PC-9 (cell line): ENCODE measurements at regions of chr6 and their contacts with region 1.

Region 1: DNA sequence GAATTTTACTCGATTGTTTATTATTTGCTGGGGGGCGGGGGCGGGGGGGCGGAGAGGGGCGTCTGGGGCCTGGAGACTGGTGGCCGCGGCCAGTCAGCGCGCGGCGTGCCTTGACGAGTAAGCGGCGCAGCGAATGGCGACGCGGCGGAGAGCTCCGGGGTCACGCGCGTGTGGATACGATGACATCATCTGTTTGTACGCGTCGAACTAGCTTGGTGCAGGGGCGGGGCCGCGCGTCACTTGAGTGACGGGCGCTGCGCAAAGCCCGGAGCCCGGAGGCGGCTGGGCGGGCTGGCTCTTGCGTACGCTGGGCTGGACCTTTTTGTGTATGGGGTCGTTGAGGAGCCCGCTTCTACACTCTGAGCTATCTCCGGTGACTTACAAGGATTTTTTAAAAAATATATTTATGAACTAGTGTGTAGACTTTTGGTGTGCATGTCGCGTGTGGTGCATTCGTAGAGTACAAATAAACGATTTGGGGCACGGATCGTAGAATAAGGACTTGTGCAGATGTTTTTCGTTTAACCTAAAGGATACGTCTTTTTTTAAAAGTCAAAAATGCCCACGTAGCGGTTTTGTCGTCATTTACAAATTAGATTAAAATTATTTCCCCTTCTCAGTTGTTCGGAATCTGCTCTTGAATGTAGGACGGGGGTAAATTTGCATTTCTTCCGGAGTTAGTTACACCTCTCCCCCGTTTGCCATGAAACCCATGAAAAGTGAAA is 2.2 kb upstream of the FOXO3 start:
- DNase-seq: peak; percentile 95 to 96
- H3K4me3 ChIP-seq: peak overlapping the region; percentile 99
- H3K27ac ChIP-seq: peak overlapping the region; percentile 83
- H3K4me1 ChIP-seq: peaks cover 12% of the 10 kb centered on the region
- H3K27me3 ChIP-seq: no peaks in the 10 kb centered on the region
- CTCF ChIP-seq: no peak

Region 2: DNA sequence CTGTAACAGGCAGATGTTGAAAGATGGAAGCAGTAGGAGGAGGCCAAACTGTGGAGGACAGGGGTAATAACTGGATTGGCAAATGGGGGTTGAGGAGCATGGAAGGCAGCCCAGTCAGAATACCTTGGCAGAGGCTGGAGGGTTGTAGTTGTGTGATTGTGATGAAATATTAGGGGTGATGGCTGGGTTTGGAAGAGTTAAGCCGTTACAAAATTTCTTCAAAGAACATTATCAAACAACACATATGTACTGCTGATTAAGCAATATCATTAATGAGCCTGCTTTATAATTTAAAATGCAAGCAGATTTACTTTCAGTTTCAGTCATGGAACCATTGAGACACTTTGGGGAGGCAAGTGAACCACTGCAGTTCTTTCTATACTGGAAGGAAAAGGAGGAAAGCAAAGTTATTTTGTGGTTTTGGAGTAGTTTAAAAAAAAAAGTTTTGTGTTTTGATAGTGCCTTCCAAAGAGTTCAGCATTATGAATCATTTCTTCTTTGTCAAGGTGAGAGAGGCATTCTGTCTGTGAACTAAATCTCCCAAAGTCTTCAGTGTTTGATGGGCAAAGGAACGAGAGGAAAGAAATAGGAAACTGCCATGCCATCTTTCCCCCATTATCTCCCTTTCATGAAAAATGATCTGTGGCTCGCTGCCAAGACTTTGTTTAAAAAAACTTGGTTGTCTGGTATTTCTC is 22.9 kb after region 1 on chr6:
- CTCF ChIA-PET with region 1: no interaction called
- POLR2A ChIA-PET with region 1: no interaction called
- intact Hi-C with region 1: loop called (anchors 1 kb)
- DNase-seq: peak; percentile 51 to 86
- H3K4me3 ChIP-seq: peak overlapping the region; percentile 32; the same call in 1 of the 2 replicates
- H3K27ac ChIP-seq: peak overlapping the region; percentile 70
- H3K4me1 ChIP-seq: peaks cover 66% of the 10 kb centered on the region
- H3K27me3 ChIP-seq: no peaks in the 10 kb centered on the region
- CTCF ChIP-seq: no peak

Region 3: GRCh38 chr6:108689247-108690161 is 131.0 kb after region 1 on chr6:
- CTCF ChIA-PET with region 1: no interaction called
- POLR2A ChIA-PET with region 1: interaction called, 9 read pairs
- intact Hi-C with region 1: loop called (anchors 1 kb)
- DNase-seq: peak; percentile 96 to 99
- H3K4me3 ChIP-seq: peak overlapping the region; percentile 7; the same call in 1 of the 2 replicates
- H3K27ac ChIP-seq: peak overlapping the region; percentile 83
- H3K4me1 ChIP-seq: peaks cover 66% of the 10 kb centered on the region
- H3K27me3 ChIP-seq: no peaks in the 10 kb centered on the region
- CTCF ChIP-seq: no peak

Region 4: GRCh38 chr6:108732136-108732885 is 173.8 kb after region 1 on chr6:
- CTCF ChIA-PET with region 1: no interaction called
- POLR2A ChIA-PET with region 1: interaction called, 9 read pairs
- intact Hi-C with region 1: loop called (anchors 1 kb)
- DNase-seq: peak; percentile 96 to 100
- H3K4me3 ChIP-seq: peak overlapping the region; percentile 46; the same call in 1 of the 2 replicates
- H3K27ac ChIP-seq: peak overlapping the region; percentile 99
- H3K4me1 ChIP-seq: peaks cover 71% of the 10 kb centered on the region
- H3K27me3 ChIP-seq: no peaks in the 10 kb centered on the region
- CTCF ChIP-seq: no peak

Region 5: DNA sequence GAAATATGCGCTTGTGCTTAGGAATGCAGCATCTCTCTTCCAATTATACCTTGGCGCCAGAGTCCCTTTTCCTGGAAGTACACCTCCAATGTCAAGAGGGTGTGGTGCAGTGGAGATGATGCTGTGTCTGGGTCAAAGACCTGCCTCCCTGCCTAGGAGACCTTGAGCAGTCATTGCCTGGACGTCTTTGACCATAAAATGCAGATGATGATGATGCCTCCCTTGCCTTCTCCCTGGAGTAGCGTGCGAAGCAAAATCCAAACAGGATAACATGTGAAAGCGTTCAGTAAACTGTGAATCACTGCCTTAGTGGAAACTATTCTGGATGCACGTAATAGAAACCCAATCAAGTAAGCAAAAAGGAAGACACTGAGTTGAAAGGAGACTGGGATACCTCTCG is 192.3 kb after region 1 on chr6:
- CTCF ChIA-PET with region 1: no interaction called
- POLR2A ChIA-PET with region 1: interaction called, 13 read pairs
- intact Hi-C with region 1: no loop called
- DNase-seq: no peak
- H3K4me3 ChIP-seq: no peak overlapping the region
- H3K27ac ChIP-seq: no peak overlapping the region
- H3K4me1 ChIP-seq: peaks cover 61% of the 10 kb centered on the region
- H3K27me3 ChIP-seq: no peaks in the 10 kb centered on the region
- CTCF ChIP-seq: no peak

Region 6: GRCh38 chr6:108835218-108835850 is 276.8 kb after region 1 on chr6:
- CTCF ChIA-PET with region 1: interaction called, 3 read pairs
- POLR2A ChIA-PET with region 1: interaction called, 3 read pairs
- intact Hi-C with region 1: loop called (anchors 1 kb)
- DNase-seq: peak; percentile 61 to 78
- H3K4me3 ChIP-seq: no peak overlapping the region
- H3K27ac ChIP-seq: no peak overlapping the region
- H3K4me1 ChIP-seq: no peaks in the 10 kb centered on the region
- H3K27me3 ChIP-seq: no peaks in the 10 kb centered on the region
- CTCF ChIP-seq: peak; percentile 95

Region 7: GRCh38 chr6:109671733-109672132 is 1113.2 kb after region 1 on chr6:
- CTCF ChIA-PET with region 1: no interaction called
- POLR2A ChIA-PET with region 1: no interaction called
- intact Hi-C with region 1: no loop called
- DNase-seq: peak in 1 of 2 experiments; percentile 51
- H3K4me3 ChIP-seq: no peak overlapping the region
- H3K27ac ChIP-seq: no peak overlapping the region
- H3K4me1 ChIP-seq: no peaks in the 10 kb centered on the region
- H3K27me3 ChIP-seq: no peaks in the 10 kb centered on the region
- CTCF ChIP-seq: no peak